Naive thymus-derived CD4-positive, alpha-beta T cell (primary cell): ENCODE measurements at regions of chr13 and their contacts with region 1.

Region 1: DNA sequence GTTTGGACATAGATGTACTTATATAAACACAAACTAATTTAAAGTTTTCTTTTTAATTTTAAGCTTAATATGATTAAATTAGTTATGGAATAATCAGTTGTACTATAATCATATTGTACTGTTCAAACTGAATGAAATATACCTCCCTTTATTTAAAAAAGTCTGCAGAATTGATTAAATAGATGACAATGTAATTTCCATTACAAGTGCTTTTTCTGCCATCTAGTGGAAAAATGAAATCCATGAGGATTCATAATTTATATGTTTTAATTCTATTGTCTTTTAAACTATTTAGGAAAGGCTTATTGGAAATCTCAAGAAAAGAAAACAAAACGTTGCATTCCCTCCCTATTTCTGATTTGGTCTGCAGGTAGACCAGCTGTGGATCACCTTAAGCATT is 30.9 kb downstream of the MZT1 start:
- DNase-seq: no peak
- ATAC-seq: no peak
- H3K4me3 ChIP-seq: no peak overlapping the region
- H3K4me3 Mint-ChIP-seq: no peak overlapping the region
- H3K27ac ChIP-seq: no peak overlapping the region
- H3K27ac Mint-ChIP-seq: no peak overlapping the region
- H3K4me1 ChIP-seq: no peaks in the 10 kb centered on the region
- H3K4me1 Mint-ChIP-seq: no peaks in the 10 kb centered on the region
- H3K27me3 ChIP-seq: no peaks in the 10 kb centered on the region
- H3K27me3 Mint-ChIP-seq: peaks cover 0 to 30% (median 25%) of the 10 kb centered on the region in 5 donors

Region 2: DNA sequence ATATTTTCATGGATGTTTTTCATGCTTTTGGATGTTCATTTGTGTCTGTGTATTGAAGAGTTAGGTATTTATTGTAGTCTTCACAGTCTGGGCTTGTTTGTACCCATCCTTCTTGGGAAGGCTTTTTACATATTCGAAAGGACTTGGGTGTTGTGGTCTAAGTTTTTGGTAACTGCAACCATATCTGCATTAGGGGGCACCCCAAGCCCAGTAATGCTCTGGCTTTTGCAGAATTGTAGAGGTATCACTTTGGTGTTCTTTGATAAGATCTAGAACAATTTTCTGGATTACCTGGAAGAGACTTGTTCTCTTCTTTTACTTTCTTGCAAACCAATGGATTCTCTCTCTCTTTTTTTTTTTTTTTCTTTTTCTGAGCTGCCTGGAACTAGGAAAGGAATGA is 1410.9 kb before region 1 on chr13:
- CTCF ChIA-PET with region 1: no interaction called
- POLR2A ChIA-PET with region 1: no interaction called
- intact Hi-C with region 1: loop called in 1 of 2 experiments (anchors 5 kb)
- DNase-seq: peak in 4 of 9 donors; percentile 6 to 12 (median 9)
- ATAC-seq: no peak
- H3K4me3 ChIP-seq: no peak overlapping the region
- H3K4me3 Mint-ChIP-seq: no peak overlapping the region
- H3K27ac ChIP-seq: no peak overlapping the region
- H3K27ac Mint-ChIP-seq: no peak overlapping the region
- H3K4me1 ChIP-seq: peaks cover 0 to 6% of the 10 kb centered on the region in 2 donors
- H3K4me1 Mint-ChIP-seq: peaks cover 0 to 11% (median 5%) of the 10 kb centered on the region in 7 donors
- H3K27me3 ChIP-seq: no peaks in the 10 kb centered on the region
- H3K27me3 Mint-ChIP-seq: peaks cover 0 to 13% (median 6%) of the 10 kb centered on the region in 5 donors

Region 3: GRCh38 chr13:71962735-71963134 is 733.8 kb before region 1 on chr13:
- CTCF ChIA-PET with region 1: no interaction called
- POLR2A ChIA-PET with region 1: no interaction called
- intact Hi-C with region 1: no loop called
- DNase-seq: no peak
- ATAC-seq: no peak
- H3K4me3 ChIP-seq: no peak overlapping the region
- H3K4me3 Mint-ChIP-seq: no peak overlapping the region
- H3K27ac ChIP-seq: no peak overlapping the region
- H3K27ac Mint-ChIP-seq: no peak overlapping the region
- H3K4me1 ChIP-seq: no peaks in the 10 kb centered on the region
- H3K4me1 Mint-ChIP-seq: peaks cover 0 to 5% (median 0%) of the 10 kb centered on the region in 7 donors
- H3K27me3 ChIP-seq: no peaks in the 10 kb centered on the region
- H3K27me3 Mint-ChIP-seq: no peaks in the 10 kb centered on the region

Region 4: GRCh38 chr13:71979616-71980015 is 717.0 kb before region 1 on chr13:
- CTCF ChIA-PET with region 1: no interaction called
- POLR2A ChIA-PET with region 1: no interaction called
- intact Hi-C with region 1: no loop called
- DNase-seq: no peak
- ATAC-seq: no peak
- H3K4me3 ChIP-seq: no peak overlapping the region
- H3K4me3 Mint-ChIP-seq: no peak overlapping the region
- H3K27ac ChIP-seq: no peak overlapping the region
- H3K27ac Mint-ChIP-seq: no peak overlapping the region
- H3K4me1 ChIP-seq: no peaks in the 10 kb centered on the region
- H3K4me1 Mint-ChIP-seq: no peaks in the 10 kb centered on the region
- H3K27me3 ChIP-seq: no peaks in the 10 kb centered on the region
- H3K27me3 Mint-ChIP-seq: no peaks in the 10 kb centered on the region

Region 5: DNA sequence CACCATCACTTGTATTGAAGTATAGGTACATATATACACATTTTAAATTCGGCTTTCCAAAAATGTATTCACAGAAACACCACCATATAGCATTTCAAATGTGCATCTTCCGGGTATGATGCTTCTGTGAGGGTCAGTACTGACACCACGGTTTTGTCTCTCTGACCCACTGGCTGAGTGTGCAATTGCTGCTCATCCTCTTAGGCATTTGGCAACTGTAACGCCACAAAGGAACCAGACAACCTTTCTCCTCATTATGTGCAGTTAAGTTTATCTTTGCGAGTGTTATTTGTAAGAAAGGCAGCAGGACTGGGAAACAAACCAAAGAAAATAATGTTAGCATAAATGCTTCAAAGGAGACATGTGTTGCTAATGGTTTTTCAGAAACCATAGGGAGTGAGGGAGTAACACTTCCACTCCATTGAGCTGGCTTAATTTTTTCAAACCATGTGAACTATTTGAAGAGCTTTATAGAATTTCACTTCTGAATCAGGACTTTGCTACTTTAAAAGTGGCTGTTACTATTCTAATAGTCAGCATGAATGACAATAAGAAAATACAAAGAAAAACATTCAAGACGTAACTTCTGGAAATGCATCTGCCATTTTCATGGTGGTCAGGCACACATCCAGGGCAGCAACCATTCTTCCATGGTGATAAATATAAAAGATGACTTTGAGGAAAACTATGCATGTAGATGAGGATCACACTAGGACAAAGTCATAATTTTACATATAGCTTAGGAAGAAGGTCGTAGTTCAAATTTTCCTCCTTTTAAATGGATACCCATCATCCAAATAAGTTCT is 392.4 kb before region 1 on chr13:
- CTCF ChIA-PET with region 1: no interaction called
- POLR2A ChIA-PET with region 1: no interaction called
- intact Hi-C with region 1: no loop called
- DNase-seq: no peak
- ATAC-seq: no peak
- H3K4me3 ChIP-seq: no peak overlapping the region
- H3K4me3 Mint-ChIP-seq: no peak overlapping the region
- H3K27ac ChIP-seq: no peak overlapping the region
- H3K27ac Mint-ChIP-seq: no peak overlapping the region
- H3K4me1 ChIP-seq: no peaks in the 10 kb centered on the region
- H3K4me1 Mint-ChIP-seq: no peaks in the 10 kb centered on the region
- H3K27me3 ChIP-seq: no peaks in the 10 kb centered on the region
- H3K27me3 Mint-ChIP-seq: no peaks in the 10 kb centered on the region

Region 6: DNA sequence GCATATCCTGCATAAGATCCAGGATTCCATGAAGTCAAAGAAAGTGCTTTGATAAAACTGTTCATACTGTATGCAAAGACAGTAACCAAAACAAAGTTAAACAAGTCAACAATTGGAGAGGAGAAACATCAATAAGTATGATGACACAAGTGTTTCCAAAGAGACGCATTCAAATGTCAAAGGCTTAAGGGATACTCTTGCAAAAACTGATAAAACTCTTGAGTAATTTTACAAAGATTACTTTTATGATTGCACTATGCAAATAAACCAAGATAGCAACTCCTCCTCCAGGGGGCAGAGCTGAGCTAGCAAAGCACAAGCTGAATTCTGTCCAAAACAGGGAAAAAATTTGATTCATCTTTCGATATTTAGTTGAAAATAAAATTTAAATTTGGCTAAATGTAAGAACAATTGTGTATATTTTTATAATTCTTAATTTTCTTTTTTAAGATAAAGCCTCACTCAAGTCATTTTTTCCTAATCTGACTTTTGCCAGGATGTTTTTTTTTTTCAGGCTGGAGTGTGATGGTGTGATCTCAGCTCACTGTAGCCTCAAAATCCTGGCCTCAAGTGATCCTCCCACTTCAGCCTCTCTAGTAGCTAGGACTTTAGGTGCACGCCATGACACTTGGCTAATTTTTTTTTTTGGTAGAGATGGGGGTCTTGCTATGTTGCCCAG is 53.1 kb before region 1 on chr13:
- CTCF ChIA-PET with region 1: no interaction called
- POLR2A ChIA-PET with region 1: no interaction called
- intact Hi-C with region 1: loop called in 1 of 2 experiments (anchors 1 kb)
- DNase-seq: peak in 6 of 9 donors; percentile 19 to 42 (median 30)
- ATAC-seq: peak; percentile 52
- H3K4me3 ChIP-seq: no peak overlapping the region
- H3K4me3 Mint-ChIP-seq: no peak overlapping the region
- H3K27ac ChIP-seq: no peak overlapping the region
- H3K27ac Mint-ChIP-seq: no peak overlapping the region
- H3K4me1 ChIP-seq: no peaks in the 10 kb centered on the region
- H3K4me1 Mint-ChIP-seq: no peaks in the 10 kb centered on the region
- H3K27me3 ChIP-seq: no peaks in the 10 kb centered on the region
- H3K27me3 Mint-ChIP-seq: peaks cover 3 to 14% (median 4%) of the 10 kb centered on the region in 5 donors